Heart left ventricle (tissue), 16 donors: ENCODE measurements at regions of chr1 and their contacts with region 1.

Region 1: GRCh38 chr1:19651141-19651737 is 7.1 kb downstream of the NBL1 start:
- DNase-seq: peak in 4 of 5 donors; percentile 64 to 70 (median 66)
- ATAC-seq: peak; percentile 75 to 87 (median 82)
- H3K4me3 ChIP-seq: peak overlapping the region in 5 of 12 donors; percentile 0 to 33 (median 15)
- H3K27ac ChIP-seq: peak overlapping the region; percentile 4 to 95 (median 78)
- H3K4me1 ChIP-seq: peaks cover 12 to 77% (median 54%) of the 10 kb centered on the region in 12 donors
- H3K27me3 ChIP-seq: peaks cover 0 to 5% (median 0%) of the 10 kb centered on the region in 9 donors
- CTCF ChIP-seq: peak; percentile 60 to 82 (median 76)
- POLR2A ChIP-seq: no peak

Region 2: GRCh38 chr1:19209990-19210771 is 441.1 kb before region 1 on chr1 and contains the start of gene UBR4:
- intact Hi-C with region 1: loop called in 1 of 10 experiments (anchors 10 kb)
- DNase-seq: peak; percentile 94 to 97 (median 96)
- ATAC-seq: peak; percentile 98
- H3K4me3 ChIP-seq: peak within 1 kb of the TSS; percentile 69 to 95 (median 86)
- H3K27ac ChIP-seq: peak within 1 kb of the TSS; percentile 81 to 98 (median 94)
- H3K4me1 ChIP-seq: peaks cover 10 to 70% (median 55%) of the 10 kb centered on the region in 12 donors
- H3K27me3 ChIP-seq: no peaks in the 10 kb centered on the region
- CTCF ChIP-seq: peak in 2 of 12 donors; percentile 11 to 22
- POLR2A ChIP-seq: peak; percentile 68 to 92
- total RNA-seq, gene UBR4: 44.8 to 150 (median 94.4) TPM

Region 3: GRCh38 chr1:19240673-19241538 is 410.3 kb before region 1 on chr1:
- intact Hi-C with region 1: loop called in 1 of 10 experiments (anchors 10 kb)
- DNase-seq: peak in 4 of 5 donors; percentile 44 to 67 (median 58)
- ATAC-seq: peak; percentile 75 to 93 (median 92)
- H3K4me3 ChIP-seq: no peak overlapping the region
- H3K27ac ChIP-seq: no peak overlapping the region
- H3K4me1 ChIP-seq: peaks cover 0 to 6% (median 0%) of the 10 kb centered on the region in 12 donors
- H3K27me3 ChIP-seq: no peaks in the 10 kb centered on the region
- CTCF ChIP-seq: peak; percentile 85 to 99 (median 96)
- POLR2A ChIP-seq: no peak

Region 4: DNA sequence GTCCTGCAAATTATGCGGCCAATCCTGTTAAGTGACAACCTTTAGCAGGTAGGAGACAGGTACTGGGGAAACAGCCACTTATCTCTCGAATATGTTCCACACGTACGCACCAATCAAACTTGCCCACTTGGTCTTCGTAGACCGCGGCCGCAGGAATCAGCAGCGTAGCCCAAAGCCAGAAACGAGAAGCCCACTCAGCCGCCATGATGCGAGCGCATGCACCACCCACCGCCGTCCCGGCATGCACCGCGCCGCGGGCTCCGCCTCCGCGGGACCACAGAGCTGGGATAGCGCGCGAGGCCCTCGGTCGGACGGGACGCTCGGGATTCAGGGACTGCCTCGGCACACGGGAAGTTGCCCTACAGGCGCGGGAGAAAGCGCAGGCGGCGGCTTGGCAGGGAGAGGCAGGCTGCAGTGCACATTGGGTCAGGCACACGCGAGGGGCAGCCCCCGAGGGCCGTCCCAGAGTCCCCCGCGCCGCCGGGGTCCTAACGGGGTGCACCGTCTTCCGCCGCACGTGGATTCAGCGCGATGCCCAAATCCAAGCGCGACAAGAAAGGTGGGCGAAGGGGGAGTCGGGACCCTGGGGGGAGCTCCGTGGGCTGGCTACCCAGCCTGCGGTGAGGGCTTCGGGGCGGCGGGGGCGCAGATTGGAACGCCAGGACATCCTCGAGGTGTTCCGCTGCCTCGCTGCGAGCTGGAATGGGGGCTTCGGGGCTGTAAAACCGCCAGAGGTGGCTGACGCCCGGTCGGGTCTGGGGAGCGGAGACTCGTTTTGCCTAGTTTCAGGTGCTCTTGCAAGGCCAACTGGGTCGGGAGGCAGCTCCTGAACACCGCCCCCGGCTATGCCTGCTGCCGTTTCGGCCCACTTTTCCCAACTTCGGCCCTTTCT is 399.7 kb before region 1 on chr1 and contains the starts of genes EMC1 and MRTO4:
- intact Hi-C with region 1: loop called in 8 of 10 experiments (anchors 5 to 10 kb)
- DNase-seq: peak; percentile 84 to 92 (median 90)
- ATAC-seq: peak; percentile 87 to 97 (median 96)
- H3K4me3 ChIP-seq: peak within 1 kb of the TSS; percentile 63 to 95 (median 80)
- H3K27ac ChIP-seq: peak within 1 kb of the TSS; percentile 91 to 98 (median 96)
- H3K4me1 ChIP-seq: peaks cover 3 to 37% (median 25%) of the 10 kb centered on the region in 12 donors
- H3K27me3 ChIP-seq: no peaks in the 10 kb centered on the region
- CTCF ChIP-seq: no peak
- POLR2A ChIP-seq: peak in 1 of 2 donors; percentile 66
- total RNA-seq, gene EMC1: 23.4 to 54.5 (median 32.7) TPM
- total RNA-seq, gene MRTO4: 8.3 to 17.4 (median 13.7) TPM

Region 5: DNA sequence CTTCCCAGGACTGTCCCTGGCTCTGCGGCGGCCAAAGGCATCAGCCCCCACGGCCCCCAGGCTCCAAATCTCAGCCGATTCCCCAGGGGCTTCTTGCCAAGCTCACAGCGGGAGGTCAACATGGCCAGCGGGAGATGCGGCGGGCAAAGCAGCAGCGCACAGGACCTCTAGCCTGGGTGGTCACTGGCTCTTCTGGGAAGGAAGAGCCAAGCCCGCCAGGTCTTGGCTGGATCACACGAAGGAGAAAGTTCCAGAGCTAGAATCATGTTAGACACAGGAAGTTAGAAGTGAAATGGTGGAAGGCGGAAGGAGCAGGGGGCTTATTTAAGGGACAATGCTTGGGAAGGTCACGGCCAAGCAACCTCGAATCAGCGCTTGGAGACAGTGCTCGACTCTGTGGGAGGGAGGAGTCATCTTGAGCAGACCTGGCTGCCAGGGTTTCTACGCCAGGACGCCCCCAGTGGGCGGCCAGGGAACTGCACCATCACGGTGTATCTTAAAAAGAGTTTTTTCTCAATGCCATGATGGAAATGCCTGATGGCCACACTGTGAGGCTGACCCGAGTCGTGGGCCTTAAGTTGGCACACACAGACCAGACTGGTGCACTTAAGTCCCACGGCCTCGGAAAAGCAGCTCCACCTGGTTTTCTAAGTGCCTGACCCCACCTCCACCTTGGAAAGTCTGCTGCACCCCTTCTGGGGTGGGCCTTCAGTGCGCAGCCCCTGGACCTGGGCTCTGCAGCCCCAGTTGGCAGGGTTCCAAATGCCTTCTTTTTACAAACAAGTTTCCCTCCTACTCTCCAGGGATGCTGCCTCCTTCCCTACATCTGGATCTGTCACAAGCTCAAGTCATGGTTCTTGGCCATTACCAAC is 309.8 kb before region 1 on chr1:
- intact Hi-C with region 1: loop called (anchors 1 to 5 kb)
- DNase-seq: peak; percentile 51 to 80 (median 65)
- ATAC-seq: peak in 3 of 4 donors; percentile 42 to 61 (median 52)
- H3K4me3 ChIP-seq: no peak overlapping the region
- H3K27ac ChIP-seq: peak overlapping the region in 6 of 12 donors; percentile 20 to 52 (median 34)
- H3K4me1 ChIP-seq: peaks cover 0 to 27% (median 9%) of the 10 kb centered on the region in 12 donors
- H3K27me3 ChIP-seq: no peaks in the 10 kb centered on the region
- CTCF ChIP-seq: peak; percentile 73 to 95 (median 86)
- POLR2A ChIP-seq: no peak

Region 6: GRCh38 chr1:19390901-19391595 is 260.2 kb before region 1 on chr1:
- intact Hi-C with region 1: loop called (anchors 2 to 5 kb)
- DNase-seq: peak in 3 of 5 donors; percentile 59 to 70 (median 62)
- ATAC-seq: peak in 3 of 4 donors; percentile 19 to 55 (median 55)
- H3K4me3 ChIP-seq: peak overlapping the region in 8 of 12 donors; percentile 2 to 38 (median 26)
- H3K27ac ChIP-seq: peak overlapping the region; percentile 47 to 84 (median 72)
- H3K4me1 ChIP-seq: peaks cover 3 to 79% (median 51%) of the 10 kb centered on the region in 12 donors
- H3K27me3 ChIP-seq: no peaks in the 10 kb centered on the region
- CTCF ChIP-seq: peak; percentile 60 to 88 (median 74)
- POLR2A ChIP-seq: no peak

Region 7: DNA sequence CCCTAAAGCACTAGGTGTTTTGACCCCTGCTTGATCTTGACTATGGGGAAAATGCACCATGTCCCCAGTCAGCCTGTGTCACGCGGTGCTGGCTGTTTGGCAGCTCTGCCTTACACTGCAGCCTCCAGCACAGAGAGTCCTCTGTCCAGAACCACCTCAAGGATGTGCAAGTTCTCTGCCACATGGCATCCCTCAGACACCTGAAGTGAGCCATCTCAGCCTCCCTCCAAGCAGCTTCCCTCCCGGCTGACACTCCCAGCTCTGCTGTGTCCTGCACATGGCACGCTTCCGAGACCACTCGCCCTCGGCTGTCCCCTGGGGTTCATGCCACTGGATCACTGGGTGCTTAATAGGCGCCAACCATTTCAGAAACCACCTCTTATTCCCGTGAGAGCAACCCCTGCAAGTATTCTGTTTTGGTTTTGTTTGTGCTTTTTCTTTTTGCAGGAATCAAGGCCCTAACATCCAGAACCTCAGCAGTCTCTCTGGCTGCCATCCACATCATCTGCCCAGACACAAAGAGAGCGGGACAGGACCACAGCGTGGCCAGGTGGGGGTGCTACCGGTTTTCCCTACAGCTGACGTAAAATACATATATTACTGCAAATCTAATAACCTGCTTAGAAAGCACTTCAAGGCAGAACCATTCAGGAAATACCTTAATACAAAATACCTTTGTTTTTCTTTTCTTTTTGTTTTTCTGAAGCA is 211.6 kb before region 1 on chr1:
- intact Hi-C with region 1: loop called in 2 of 10 experiments (anchors 5 kb)
- DNase-seq: peak in 3 of 5 donors; percentile 49 to 84 (median 75)
- ATAC-seq: peak; percentile 57 to 71 (median 64)
- H3K4me3 ChIP-seq: no peak overlapping the region
- H3K27ac ChIP-seq: peak overlapping the region; percentile 80 to 97 (median 84)
- H3K4me1 ChIP-seq: peaks cover 55 to 100% (median 94%) of the 10 kb centered on the region in 12 donors
- H3K27me3 ChIP-seq: no peaks in the 10 kb centered on the region
- CTCF ChIP-seq: peak in 10 of 12 donors; percentile 7 to 52 (median 30)
- POLR2A ChIP-seq: no peak